ENCODE measurements at regions of chr5 and their contacts with region 1.

Region 1: DNA sequence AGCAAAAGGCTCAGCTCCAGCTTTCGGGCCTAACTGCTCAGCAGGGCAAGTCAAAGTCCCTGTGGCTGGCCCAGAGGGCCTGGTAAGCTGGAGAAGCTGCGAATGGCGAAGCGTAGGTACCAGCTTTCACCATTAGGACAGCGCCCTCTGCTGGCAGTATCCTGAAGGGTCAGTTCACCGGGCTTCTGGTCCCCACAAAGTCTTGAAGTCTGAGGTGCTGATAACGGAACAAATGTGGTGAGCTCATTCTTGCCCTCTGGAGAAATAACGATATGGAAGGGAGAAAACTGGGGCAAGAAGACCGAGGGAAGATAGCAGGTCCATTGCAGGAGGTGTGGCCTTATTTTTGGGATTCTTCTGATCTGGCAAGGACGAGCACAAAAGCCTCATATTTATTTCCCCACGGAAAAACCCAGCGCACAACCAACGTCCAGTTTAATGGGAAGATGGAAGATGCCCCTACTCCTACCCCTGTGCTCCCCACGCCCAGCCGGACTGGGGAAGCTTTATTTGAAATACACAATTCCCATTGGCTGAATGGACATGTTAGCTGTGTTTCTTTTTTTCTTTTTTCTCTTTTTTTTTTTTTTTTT is 7.2 kb downstream of the SOWAHA start:
- DNase-seq: peak; percentile 94
- ATAC-seq: peak; percentile 96
- H3K4me3 Mint-ChIP-seq: no peak overlapping the region
- H3K27ac Mint-ChIP-seq: no peak overlapping the region
- H3K4me1 Mint-ChIP-seq: peaks cover 25% of the 10 kb centered on the region
- H3K27me3 Mint-ChIP-seq: peaks cover 27% of the 10 kb centered on the region

Region 2: DNA sequence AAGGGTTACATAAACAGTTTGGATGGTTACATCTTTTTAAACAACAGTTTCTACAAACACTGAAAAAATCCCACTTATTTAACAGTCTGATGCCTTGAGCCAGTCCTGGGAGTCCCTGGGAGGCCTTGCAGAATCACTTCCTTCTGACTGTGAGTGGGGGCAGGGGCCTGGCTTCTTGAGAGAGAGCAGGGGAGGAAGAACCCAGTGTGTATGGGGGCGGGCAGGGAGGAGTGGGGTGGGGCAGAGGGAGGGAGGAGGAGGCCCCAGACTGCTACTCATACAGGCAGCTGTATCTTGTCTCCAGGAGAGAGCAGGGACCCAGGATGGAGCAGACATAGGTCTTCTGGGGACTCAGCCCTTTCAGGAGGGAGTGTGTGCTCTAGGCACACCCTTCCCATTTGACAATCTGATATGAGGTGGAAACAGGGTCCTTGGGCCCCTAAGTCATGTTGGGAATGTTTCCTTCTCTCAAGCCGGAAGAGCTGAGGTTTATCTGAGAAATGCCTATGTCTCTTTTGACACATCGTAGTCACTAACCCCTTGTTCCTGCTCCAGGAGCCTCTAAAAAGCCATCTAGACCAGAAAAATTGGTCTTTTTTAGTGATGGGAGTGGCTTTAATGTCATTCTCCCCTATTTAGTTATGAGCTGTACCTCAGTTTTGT is 382.5 kb before region 1 on chr5:
- CTCF ChIA-PET with region 1: no interaction called
- DNase-seq: peak; percentile 86
- ATAC-seq: peak; percentile 96
- H3K4me3 Mint-ChIP-seq: peak overlapping the region; percentile 43
- H3K27ac Mint-ChIP-seq: peak overlapping the region; percentile 86
- H3K4me1 Mint-ChIP-seq: peaks cover 81% of the 10 kb centered on the region
- H3K27me3 Mint-ChIP-seq: no peaks in the 10 kb centered on the region

Region 3: DNA sequence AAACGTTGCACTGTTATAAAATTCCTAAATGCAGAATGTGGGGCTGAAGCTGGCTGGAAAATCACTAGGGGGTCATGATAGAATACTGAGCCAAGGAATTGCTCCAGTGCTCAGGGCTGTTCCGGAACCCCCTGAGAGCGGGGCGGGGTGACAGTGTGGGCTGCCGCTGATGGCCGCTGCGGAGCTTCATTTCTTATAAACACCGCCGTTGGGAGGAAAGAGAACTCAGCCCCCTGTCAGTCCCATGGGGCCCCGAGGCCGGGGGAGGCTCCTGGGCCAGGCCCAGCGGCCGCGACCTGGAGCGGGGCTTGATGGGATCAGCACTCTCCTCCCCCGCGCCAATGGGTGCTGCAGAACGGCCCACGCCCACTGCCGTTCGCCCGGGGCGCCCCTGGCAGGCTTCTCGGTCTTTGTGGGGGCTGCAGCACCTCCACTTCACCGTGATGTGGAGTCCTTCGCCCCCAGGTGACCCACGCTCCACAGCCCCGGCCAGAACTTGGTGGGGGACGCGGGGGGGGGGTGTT is 324.5 kb before region 1 on chr5:
- CTCF ChIA-PET with region 1: interaction called, 13 read pairs
- DNase-seq: peak; percentile 91
- ATAC-seq: peak; percentile 55
- H3K4me3 Mint-ChIP-seq: peak overlapping the region; percentile 87
- H3K27ac Mint-ChIP-seq: peak overlapping the region; percentile 92
- H3K4me1 Mint-ChIP-seq: peaks cover 74% of the 10 kb centered on the region
- H3K27me3 Mint-ChIP-seq: no peaks in the 10 kb centered on the region

Region 4: GRCh38 chr5:132526290-132526973 is 293.8 kb before region 1 on chr5:
- CTCF ChIA-PET with region 1: interaction called, 77 read pairs
- DNase-seq: peak; percentile 63
- ATAC-seq: peak; percentile 75
- H3K4me3 Mint-ChIP-seq: no peak overlapping the region
- H3K27ac Mint-ChIP-seq: peak overlapping the region; percentile 31
- H3K4me1 Mint-ChIP-seq: peaks cover 55% of the 10 kb centered on the region
- H3K27me3 Mint-ChIP-seq: no peaks in the 10 kb centered on the region

Region 5: GRCh38 chr5:132714456-132715307 is 105.6 kb before region 1 on chr5:
- CTCF ChIA-PET with region 1: interaction called, 12 read pairs
- DNase-seq: no peak
- ATAC-seq: peak; percentile 70
- H3K4me3 Mint-ChIP-seq: peak overlapping the region; percentile 3
- H3K27ac Mint-ChIP-seq: peak overlapping the region; percentile 62
- H3K4me1 Mint-ChIP-seq: peaks cover 22% of the 10 kb centered on the region
- H3K27me3 Mint-ChIP-seq: no peaks in the 10 kb centered on the region

Region 6: DNA sequence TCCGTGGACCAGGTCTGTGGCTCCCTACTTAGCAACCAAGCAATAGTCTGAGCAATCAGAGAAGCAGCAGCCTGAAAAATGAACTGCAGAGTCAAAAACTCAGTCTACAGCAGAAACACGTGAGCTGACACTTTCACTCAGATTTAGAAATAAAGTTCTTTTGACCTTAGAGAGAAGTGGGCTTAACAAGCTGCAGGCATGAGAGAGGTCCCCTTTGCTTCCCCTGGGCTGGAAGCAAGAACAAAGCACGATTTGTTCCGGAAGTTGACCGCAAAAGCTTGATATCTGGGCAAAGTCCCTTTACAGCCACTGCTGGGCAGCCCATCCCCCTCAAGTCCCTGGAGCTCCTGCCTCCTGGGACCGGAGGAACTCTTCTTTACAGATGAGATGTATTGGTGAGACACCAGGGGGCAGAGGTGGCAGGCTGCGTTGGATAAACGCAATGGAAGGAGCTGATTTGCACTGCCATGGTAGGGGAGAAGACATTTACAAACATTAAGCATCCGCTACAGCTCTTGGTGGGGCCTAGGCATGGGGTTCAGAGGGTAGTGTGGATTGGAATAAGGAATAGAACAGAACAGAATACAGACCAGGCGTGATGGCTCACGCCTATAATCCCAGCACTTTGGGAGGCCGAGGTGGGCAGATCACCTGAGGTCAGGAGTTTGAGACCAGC is 13.0 kb before region 1 on chr5:
- CTCF ChIA-PET with region 1: interaction called, 35 read pairs
- DNase-seq: peak; percentile 40
- ATAC-seq: no peak
- H3K4me3 Mint-ChIP-seq: no peak overlapping the region
- H3K27ac Mint-ChIP-seq: no peak overlapping the region
- H3K4me1 Mint-ChIP-seq: peaks cover 4% of the 10 kb centered on the region
- H3K27me3 Mint-ChIP-seq: peaks cover 71% of the 10 kb centered on the region

Region 7: DNA sequence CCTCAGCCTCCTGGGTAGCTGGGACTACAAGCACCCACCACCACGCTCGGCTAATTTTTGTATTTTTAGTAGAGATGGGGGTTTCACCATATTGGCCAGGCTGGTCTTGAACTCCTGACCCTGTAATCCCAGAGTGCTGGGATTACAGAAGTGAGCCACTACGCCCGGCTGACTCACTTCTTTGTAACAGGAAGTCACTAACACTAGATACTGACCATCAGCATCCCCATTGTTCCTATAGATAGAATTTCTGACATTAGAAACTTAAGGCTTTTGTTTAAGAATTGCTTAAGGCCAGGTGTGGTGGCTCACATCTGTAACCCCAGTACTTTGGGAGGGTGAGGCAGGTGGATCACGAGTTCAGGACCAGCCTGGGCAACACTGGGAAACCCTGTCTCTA is 95.4 kb after region 1 on chr5:
- CTCF ChIA-PET with region 1: no interaction called
- DNase-seq: no peak
- ATAC-seq: no peak
- H3K4me3 Mint-ChIP-seq: no peak overlapping the region
- H3K27ac Mint-ChIP-seq: no peak overlapping the region
- H3K4me1 Mint-ChIP-seq: no peaks in the 10 kb centered on the region
- H3K27me3 Mint-ChIP-seq: no peaks in the 10 kb centered on the region

Region 8: GRCh38 chr5:133006653-133007052 is 186.4 kb after region 1 on chr5:
- CTCF ChIA-PET with region 1: no interaction called
- DNase-seq: no peak
- ATAC-seq: no peak
- H3K4me3 Mint-ChIP-seq: no peak overlapping the region
- H3K27ac Mint-ChIP-seq: no peak overlapping the region
- H3K4me1 Mint-ChIP-seq: peaks cover 2% of the 10 kb centered on the region
- H3K27me3 Mint-ChIP-seq: no peaks in the 10 kb centered on the region